Activated CD4-positive, alpha-beta T cell treated with anti-CD3 and anti-CD28 coated beads for 36 hours (primary cell): ENCODE measurements at regions of chr7 and their contacts with region 1.

Region 1: DNA sequence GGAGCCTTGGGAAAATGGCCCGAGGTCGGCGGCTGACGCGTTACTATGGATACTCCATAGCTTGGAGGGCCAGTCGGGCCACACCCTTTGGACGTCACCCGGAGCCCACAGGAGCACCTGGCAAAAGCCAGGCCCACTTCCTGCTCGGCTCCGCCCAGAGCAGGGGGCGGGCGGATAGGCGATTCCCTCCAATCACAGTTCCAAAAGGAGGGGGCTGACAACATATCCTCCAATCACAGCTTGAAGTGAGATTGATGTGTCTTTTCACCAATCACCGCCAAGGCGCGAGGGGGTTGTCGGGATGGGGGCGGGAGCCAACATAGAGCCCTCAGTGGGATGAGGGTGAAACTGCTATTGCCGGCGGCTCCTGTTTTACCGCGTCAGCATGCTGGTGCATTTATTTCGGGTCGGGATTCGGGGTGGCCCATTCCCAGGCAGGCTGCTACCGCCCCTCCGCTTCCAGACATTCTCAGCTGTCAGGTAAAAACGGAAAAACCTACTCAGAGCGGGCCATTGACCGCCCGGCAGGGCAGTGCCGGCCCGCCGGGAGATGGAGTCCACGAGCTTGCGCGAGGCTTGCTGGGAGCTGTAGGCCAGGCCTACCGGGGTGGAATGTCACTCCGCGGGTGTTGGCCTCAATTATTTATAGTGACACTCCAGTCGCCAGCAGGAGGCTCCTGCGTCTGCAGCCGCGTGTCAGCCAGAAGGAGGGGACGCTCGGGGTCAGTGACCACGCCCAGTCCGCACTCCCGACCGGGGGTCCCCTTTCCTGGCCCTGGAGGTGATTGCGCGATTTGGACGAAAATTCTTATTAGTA is at the start of gene ABCB8:
- DNase-seq: peak; percentile 99
- ATAC-seq: peak; percentile 95
- H3K4me3 Mint-ChIP-seq: peak within 1 kb of the TSS; percentile 97
- H3K27ac Mint-ChIP-seq: peak within 1 kb of the TSS; percentile 95
- H3K4me1 Mint-ChIP-seq: peaks cover 23% of the 10 kb centered on the region
- H3K27me3 Mint-ChIP-seq: no peaks in the 10 kb centered on the region
- total RNA-seq, gene ABCB8: 41.9 to 44.5 TPM

Region 2: DNA sequence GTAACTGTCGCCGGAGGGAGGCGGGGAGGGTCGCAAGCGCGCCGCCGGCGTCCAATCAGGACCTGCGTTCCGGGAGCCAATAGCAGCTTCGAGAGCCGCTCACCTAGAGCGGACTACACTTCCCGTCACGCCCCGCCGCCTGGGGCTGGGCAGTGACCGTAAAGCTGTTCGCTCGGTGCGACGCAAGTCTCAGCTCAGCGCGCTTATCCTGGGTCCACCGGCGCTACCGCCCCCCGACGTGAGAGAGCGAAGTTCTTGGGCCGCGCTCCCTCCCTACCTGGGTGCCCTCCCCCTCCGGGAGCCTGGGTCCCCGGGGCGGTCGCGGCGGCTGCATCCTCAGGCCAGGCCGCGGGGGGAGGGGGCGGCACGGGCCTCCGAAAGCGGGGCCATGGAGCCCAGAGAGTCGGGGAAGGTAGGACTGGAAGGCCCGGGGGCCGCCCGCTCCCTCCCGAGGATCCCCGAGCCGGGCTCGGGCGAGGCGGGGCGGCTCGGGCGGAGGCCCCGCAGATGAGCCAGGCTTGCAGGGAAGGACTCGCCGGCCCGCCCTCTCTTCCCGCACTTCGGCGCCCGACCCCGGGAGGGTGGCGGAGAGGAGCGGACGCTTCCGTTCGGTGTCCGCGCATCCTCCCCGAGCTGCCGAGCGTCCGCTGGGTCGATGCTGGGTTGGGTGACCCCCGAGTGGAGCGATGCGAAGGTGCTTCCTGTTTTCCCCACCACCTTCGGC is 1190.0 kb before region 1 on chr7 and contains the start of gene ZNF862:
- CTCF ChIA-PET with region 1: no interaction called
- POLR2A ChIA-PET with region 1: no interaction called
- intact Hi-C with region 1: loop called in 1 of 2 experiments (anchors 1 kb)
- DNase-seq: peak; percentile 98
- ATAC-seq: peak; percentile 98
- H3K4me3 Mint-ChIP-seq: peak within 1 kb of the TSS; percentile 78
- H3K27ac Mint-ChIP-seq: peak within 1 kb of the TSS; percentile 74
- H3K4me1 Mint-ChIP-seq: peaks cover 28% of the 10 kb centered on the region
- H3K27me3 Mint-ChIP-seq: no peaks in the 10 kb centered on the region
- total RNA-seq, gene ZNF862: 17.6 to 18.3 TPM

Region 3: DNA sequence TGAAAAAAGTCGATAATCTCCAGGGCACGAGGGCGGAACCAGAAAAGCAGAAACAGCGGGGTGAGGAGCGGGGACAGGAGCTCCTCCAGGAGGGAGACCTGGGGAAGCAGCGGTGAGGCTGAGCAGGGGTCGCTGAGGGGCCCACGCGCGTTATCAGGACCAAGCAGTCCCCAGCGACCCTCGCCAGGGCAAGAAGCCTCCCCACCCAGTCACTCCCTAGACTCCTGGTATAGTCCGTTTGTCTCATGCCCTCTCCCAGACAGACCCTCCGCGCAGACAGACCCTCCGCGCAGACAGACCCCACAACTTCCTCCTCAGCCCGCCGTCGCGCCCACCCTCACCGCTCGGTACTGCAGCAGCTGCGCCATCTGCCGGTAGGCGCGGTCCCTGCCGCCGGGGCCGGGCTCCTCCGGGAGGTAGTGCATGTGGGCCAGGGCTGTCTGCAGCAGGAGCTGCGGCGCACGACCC is 10.4 kb before region 1 on chr7:
- CTCF ChIA-PET with region 1: interaction called, 26 read pairs
- POLR2A ChIA-PET with region 1: interaction called, 4 read pairs
- intact Hi-C with region 1: loop called (anchors 1 to 2 kb)
- DNase-seq: peak; percentile 90
- ATAC-seq: peak; percentile 59
- H3K4me3 Mint-ChIP-seq: peak overlapping the region; percentile 66
- H3K27ac Mint-ChIP-seq: peak overlapping the region; percentile 80
- H3K4me1 Mint-ChIP-seq: peaks cover 47% of the 10 kb centered on the region
- H3K27me3 Mint-ChIP-seq: peaks cover 9% of the 10 kb centered on the region

Region 4: DNA sequence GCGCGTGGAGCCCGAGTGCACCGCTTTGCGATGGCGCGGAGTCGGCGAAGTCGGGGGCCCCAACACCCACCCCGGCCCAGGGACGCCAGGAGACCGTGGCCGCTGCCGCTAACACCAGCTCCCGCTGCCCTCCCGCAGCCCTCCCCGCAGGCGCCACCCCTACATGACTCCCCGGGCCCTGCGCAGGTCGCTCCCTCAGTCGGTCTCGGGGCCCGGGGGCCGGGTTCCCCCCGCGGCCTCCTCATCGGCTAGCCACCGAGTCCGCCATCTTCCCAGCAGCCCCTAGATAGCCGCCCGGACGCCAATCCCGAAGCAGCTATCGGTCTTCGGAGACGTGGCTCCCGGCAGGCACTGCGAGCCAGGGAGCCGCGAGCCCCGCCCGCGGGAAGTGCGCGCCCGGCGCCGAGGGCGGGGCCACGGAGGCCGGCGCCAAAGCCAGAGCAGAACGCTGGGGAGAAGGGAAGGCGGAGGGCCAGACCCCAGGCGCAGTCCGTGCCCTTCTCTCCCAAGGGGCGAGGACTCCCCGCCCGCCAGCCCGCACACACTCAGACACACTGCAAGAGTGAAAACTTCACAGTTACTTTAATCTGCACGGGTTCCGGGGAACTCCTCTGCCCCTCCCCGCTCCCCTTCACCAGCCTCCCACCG is 52.3 kb after region 1 on chr7 and contains the start of gene FASTK:
- CTCF ChIA-PET with region 1: interaction called, 3 read pairs
- POLR2A ChIA-PET with region 1: no interaction called
- intact Hi-C with region 1: loop called (anchors 1 kb)
- DNase-seq: peak; percentile 94
- ATAC-seq: peak; percentile 89
- H3K4me3 Mint-ChIP-seq: peak within 1 kb of the TSS; percentile 94
- H3K27ac Mint-ChIP-seq: peak within 1 kb of the TSS; percentile 91
- H3K4me1 Mint-ChIP-seq: peaks cover 43% of the 10 kb centered on the region
- H3K27me3 Mint-ChIP-seq: peaks cover 7% of the 10 kb centered on the region
- total RNA-seq, gene FASTK: 56.6 to 56.7 TPM

Region 5: DNA sequence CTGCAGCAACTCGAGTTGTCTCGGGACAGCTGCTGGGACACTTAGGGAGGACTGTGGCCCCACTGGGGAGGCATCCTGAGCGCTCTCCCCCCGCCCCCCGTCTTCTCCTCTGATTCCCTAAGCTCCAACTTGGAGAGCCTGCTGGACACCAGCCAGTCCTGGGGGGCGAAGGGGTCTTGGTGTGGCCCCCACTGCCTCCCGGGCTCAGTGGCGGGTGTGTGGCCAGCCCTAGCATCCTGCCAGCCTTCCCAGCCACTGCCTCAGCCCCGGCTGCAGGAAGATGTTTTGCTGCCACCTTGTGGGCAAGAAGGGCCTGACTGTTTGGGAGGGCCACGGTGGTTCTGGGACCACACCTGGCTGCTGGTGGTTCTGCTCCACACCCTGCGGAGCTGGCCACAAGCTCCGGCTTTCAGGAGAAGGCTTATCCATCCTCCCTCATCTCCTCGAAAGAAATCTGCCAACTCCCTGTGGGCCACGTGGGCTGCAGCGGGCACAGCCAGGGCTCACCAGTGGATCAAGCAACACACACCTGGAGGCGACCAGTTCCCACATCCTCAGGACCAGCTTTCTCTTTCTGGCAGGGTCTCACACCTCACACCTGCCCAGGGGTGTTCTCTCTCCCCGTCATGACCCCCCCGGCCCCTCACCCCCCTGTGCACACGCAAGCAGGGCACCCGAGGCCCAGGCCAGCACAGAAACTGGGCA is 82.8 kb after region 1 on chr7:
- CTCF ChIA-PET with region 1: interaction called, 4 read pairs
- POLR2A ChIA-PET with region 1: no interaction called
- intact Hi-C with region 1: loop called (anchors 1 kb)
- DNase-seq: peak; percentile 85
- ATAC-seq: peak; percentile 90
- H3K4me3 Mint-ChIP-seq: no peak overlapping the region
- H3K27ac Mint-ChIP-seq: no peak overlapping the region
- H3K4me1 Mint-ChIP-seq: no peaks in the 10 kb centered on the region
- H3K27me3 Mint-ChIP-seq: peaks cover 3% of the 10 kb centered on the region

Region 6: DNA sequence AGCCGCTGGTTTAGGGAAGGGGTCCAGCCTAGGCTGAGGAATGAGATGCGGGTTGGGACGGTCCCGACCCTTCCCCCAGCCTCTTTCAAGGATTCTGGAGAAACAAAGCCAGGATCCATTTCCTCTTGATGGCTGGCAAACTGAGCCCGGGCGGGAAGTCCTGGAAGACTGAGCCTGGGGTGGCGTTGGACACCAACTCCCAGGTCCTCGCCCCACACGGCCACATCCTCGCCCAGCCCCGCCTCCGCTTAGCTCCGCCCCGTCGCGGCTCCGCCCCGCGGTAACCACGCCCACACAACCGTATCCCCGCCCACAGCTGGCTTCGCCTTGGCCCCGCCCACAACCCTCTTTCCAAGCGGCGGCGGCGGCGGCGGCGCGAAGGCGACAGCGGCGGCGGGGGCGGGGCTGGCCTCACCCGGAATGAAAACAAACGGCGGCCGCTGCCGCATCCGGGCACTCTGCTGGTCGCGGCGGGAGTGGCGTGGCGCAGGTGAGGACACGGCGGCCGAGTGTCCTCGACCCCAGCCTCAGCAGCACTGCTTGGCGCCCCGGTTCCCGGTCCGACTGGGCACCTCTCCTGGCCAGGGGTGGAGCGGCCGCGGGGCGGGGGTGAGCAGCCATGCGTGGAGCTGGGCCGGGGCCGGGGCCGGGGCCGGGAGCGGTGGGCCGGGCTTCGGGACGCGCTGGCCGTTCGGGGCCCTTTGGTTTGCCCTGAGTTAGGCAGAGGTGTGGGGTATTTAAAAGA is 313.2 kb after region 1 on chr7 and contains the start of gene NUB1:
- CTCF ChIA-PET with region 1: no interaction called
- POLR2A ChIA-PET with region 1: no interaction called
- intact Hi-C with region 1: loop called in 1 of 2 experiments (anchors 1 kb)
- DNase-seq: peak; percentile 96
- ATAC-seq: peak; percentile 82
- H3K4me3 Mint-ChIP-seq: peak within 1 kb of the TSS; percentile 76
- H3K27ac Mint-ChIP-seq: peak within 1 kb of the TSS; percentile 78
- H3K4me1 Mint-ChIP-seq: peaks cover 46% of the 10 kb centered on the region
- H3K27me3 Mint-ChIP-seq: no peaks in the 10 kb centered on the region
- total RNA-seq, gene NUB1: 51.4 to 70.4 TPM